ENCODE measurements at regions of chr1 and their contacts with region 1.

Region 1: GRCh38 chr1:230310381-230311163 is 115.6 kb downstream of the PGBD5 start:
- DNase-seq: peak; percentile 36
- H3K4me3 ChIP-seq: no peak overlapping the region
- H3K27ac ChIP-seq: no peak overlapping the region
- H3K27me3 ChIP-seq: peaks cover 4% of the 10 kb centered on the region
- CTCF ChIP-seq: peak; percentile 97

Region 2: DNA sequence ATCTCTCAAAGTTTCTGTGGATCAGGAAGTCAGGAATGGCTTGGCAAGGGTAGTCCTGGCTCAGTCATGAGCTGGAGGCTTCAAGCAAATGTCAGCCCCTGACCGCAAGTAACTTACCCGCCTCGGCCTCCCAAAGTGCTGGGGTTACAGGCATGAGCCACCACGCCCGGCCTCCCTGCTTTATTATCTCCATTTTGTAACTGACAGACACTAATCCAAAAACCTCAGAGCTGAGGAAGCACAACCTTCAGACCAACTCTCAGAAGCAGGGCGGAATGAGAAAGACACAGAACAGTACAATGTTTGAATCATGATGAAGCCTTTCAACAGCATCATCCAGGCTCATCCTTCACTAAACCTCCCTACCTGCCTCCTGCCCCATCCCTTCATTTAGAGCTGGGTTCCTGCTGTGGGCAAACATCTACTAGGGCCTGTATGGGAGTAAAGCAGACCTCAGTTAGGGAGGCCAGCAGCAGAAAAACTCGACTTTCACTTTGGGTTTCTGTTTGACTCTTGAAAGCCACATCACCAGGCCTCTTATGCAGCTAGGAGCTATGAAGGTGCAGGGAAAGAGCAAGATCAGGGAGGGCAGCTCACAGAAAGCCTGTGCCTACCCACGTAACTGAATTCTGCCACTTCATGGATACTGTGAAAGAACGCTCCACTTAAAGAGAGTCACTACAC is 1124.1 kb before region 1 on chr1:
- CTCF ChIA-PET with region 1: no interaction called
- POLR2A ChIA-PET with region 1: no interaction called
- DNase-seq: no peak
- H3K4me3 ChIP-seq: no peak overlapping the region
- H3K27ac ChIP-seq: no peak overlapping the region
- H3K27me3 ChIP-seq: no peaks in the 10 kb centered on the region
- CTCF ChIP-seq: no peak

Region 3: GRCh38 chr1:229714964-229715603 is 595.5 kb before region 1 on chr1:
- CTCF ChIA-PET with region 1: interaction called, 14 read pairs
- POLR2A ChIA-PET with region 1: no interaction called
- DNase-seq: no peak
- H3K4me3 ChIP-seq: no peak overlapping the region
- H3K27ac ChIP-seq: no peak overlapping the region
- H3K27me3 ChIP-seq: no peaks in the 10 kb centered on the region
- CTCF ChIP-seq: peak; percentile 49

Region 4: DNA sequence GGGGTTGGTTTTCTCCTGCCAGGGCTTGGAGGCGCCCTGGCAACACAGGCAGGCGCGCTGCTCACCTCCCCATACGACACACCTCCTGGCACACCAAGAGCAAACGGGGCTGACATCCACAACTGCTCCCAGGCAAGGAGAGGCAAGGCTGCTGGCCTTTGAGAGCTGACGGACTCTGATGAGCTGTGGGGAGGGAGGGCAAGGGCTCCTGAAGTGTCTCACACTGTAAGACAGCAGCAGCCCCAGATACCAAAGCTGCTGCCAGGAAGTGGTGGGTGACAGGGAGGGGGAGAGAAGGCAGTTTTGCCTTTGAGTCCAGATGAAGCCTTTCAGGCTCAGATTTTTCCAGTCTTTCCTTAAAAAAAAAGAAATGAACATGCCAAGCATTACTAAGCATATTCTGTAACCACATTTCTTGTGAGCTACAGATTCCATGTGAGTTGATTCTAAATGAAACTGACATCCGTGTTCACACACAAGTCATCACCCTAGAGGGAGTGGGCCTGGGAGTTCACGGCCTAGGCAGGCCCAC is 91.3 kb after region 1 on chr1:
- CTCF ChIA-PET with region 1: no interaction called
- POLR2A ChIA-PET with region 1: no interaction called
- DNase-seq: peak; percentile 27
- H3K4me3 ChIP-seq: no peak overlapping the region
- H3K27ac ChIP-seq: peak overlapping the region; percentile 57
- H3K27me3 ChIP-seq: no peaks in the 10 kb centered on the region
- CTCF ChIP-seq: no peak

Measured in AG04450 (cell line).